ENCODE measurements at regions of chr19 and their contacts with region 1.

Region 1: GRCh38 chr19:3108775-3109174 is 14.6 kb downstream of the GNA11 start:
- H3K4me3 ChIP-seq: no peak overlapping the region
- H3K27ac ChIP-seq: no peak overlapping the region
- H3K4me1 ChIP-seq: no peaks in the 10 kb centered on the region
- CTCF ChIP-seq: peak; percentile 78

Region 2: GRCh38 chr19:2962045-2962561 is 146.7 kb before region 1 on chr19:
- CTCF ChIA-PET with region 1: interaction called, 10 read pairs
- POLR2A ChIA-PET with region 1: no interaction called
- H3K4me3 ChIP-seq: no peak overlapping the region
- H3K27ac ChIP-seq: no peak overlapping the region
- H3K4me1 ChIP-seq: no peaks in the 10 kb centered on the region
- CTCF ChIP-seq: peak; percentile 75

Region 3: GRCh38 chr19:2969104-2969504 is 139.7 kb before region 1 on chr19:
- CTCF ChIA-PET with region 1: interaction called, 10 read pairs
- POLR2A ChIA-PET with region 1: no interaction called
- H3K4me3 ChIP-seq: no peak overlapping the region
- H3K27ac ChIP-seq: peak overlapping the region; percentile 28
- H3K4me1 ChIP-seq: peaks cover 9% of the 10 kb centered on the region
- CTCF ChIP-seq: no peak

Region 4: DNA sequence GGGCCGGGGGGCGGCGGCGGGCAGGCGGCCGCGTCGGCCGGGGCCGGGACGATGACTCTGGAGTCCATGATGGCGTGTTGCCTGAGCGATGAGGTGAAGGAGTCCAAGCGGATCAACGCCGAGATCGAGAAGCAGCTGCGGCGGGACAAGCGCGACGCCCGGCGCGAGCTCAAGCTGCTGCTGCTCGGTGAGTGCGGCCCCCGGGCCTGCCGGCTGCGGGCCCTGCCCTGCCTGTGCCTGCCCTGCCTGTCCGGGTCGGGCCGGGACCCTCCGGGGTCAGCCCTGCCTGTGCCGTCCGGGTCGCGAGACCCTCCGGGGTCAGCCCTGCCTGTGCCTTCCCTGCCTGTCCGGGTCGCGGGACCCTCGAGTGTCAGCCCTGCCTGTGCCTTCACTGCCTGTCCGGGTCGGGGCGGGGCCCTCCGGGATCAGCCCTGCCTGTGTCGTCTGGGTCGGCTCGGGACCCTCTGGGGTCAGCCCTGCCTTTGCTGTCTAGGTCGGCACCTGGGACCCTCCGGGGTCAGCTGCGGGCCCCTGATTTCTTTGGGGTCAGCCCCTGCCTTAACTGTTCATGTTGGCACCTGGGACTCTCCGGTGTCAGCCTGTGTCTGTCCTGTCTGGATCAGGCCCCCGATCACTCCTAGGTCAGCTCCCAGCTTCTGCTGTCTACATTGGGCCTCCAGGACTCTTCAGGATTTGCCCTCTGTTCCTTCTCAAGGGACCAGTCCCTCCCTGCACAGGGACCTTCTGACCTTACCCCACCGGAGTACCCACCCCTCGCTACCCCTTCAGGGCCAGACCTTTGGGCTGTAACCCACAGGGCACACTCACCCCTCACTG is 14.0 kb before region 1 on chr19:
- CTCF ChIA-PET with region 1: interaction called, 12 read pairs
- POLR2A ChIA-PET with region 1: interaction called, 11 read pairs
- H3K4me3 ChIP-seq: peak overlapping the region; percentile 78
- H3K27ac ChIP-seq: peak overlapping the region; percentile 75
- H3K4me1 ChIP-seq: peaks cover 6% of the 10 kb centered on the region; the same call in 1 of the 2 replicates
- CTCF ChIP-seq: no peak

Region 5: GRCh38 chr19:3125900-3126524 is 17.2 kb after region 1 on chr19:
- CTCF ChIA-PET with region 1: interaction called, 14 read pairs
- POLR2A ChIA-PET with region 1: no interaction called
- H3K4me3 ChIP-seq: no peak overlapping the region
- H3K27ac ChIP-seq: no peak overlapping the region
- H3K4me1 ChIP-seq: no peaks in the 10 kb centered on the region
- CTCF ChIP-seq: peak; percentile 98

Region 6: GRCh38 chr19:3193256-3194105 is 84.7 kb after region 1 on chr19:
- CTCF ChIA-PET with region 1: no interaction called
- POLR2A ChIA-PET with region 1: no interaction called
- H3K4me3 ChIP-seq: no peak overlapping the region
- H3K27ac ChIP-seq: no peak overlapping the region
- H3K4me1 ChIP-seq: no peaks in the 10 kb centered on the region
- CTCF ChIP-seq: no peak

Measured in HEK293 (cell line).